ENCODE measurements at regions of chr1 and their contacts with region 1.

Region 1: GRCh38 chr1:28552758-28553663 is at the start of gene TRNAU1AP:
- DNase-seq: peak; percentile 100

Region 2: DNA sequence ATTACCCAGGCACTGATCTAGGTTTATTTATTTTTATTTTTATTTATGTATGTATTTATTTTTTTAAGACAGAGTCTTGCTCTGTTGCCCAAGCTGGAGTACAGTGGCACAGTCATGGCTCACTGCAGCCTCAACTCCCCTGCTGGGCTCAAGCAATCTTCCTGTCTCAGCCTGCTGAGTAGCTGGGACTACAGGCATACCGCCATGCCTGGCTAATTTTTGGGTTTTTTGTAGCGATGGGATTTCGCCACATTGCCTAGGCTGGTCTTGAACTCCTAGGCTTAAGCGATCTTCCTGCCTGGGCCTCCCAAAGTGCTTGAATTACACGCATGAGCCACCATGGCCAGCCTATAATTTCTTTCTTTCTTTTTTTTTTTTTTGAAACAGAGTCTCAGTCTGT is 174.1 kb before region 1 on chr1:
- CTCF ChIA-PET with region 1: no interaction called
- POLR2A ChIA-PET with region 1: no interaction called
- DNase-seq: no peak

Region 3: DNA sequence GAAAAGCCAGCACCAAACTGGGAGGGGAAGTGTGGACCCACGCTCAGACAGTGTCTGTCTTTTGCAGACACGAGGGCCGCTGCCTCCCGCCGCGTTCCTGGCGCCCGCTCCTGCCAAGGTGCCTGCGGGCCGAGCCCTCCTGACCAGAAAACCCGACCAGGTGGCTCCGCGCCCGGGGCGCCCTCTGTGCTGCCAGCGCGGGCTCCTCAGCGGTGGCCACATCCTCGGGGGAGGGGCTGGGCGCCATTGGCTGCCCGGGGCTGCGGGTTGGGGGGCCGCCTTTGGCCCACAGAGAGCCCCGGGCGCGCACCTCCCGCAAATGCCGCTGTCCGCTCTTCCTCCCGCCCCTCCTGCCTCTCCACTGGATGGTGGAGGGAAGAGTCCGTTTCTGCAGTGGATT is 22.6 kb before region 1 on chr1:
- CTCF ChIA-PET with region 1: interaction called, 12 read pairs
- POLR2A ChIA-PET with region 1: no interaction called
- DNase-seq: no peak